ENCODE measurements at regions of chr14 and their contacts with region 1.

Region 1: DNA sequence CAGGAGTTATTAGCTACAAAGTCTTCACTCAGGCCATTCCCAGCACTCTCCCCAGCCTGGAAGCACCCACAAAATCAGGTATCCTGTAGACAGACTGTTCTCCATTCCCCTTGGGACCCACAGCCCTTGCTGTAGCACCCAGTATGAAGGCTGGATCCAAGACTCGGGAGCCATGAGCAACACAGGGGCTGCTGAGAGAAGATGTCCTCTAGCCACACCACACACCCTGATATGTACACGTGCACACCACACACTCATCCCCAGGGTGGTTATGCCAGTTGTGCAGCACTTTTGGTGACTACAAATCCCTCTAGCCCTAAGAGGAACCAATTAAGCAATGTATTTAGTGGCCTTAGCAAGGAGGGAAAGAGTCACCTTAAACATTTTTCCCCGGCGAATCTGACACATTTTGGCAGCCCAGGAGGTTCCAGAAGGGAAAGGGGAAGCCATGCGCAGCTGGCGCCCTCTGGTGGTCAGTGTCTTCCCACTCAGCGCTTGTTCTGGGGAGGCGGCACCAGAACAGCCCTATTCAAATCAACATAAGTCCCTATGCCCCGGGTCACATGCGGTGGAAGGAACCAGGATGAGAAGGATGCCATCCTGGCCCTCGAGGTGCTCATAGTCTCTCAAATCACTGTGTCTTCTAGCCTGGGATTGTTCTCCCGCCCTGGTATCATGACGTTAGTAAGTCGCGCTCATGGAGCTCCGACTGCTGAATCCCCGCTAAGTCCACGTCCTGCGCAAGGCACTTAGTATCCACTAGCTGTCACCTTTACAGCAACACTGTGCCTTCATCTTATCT is 96.9 kb downstream of the GCH1 start:
- DNase-seq: peak; percentile 80 to 87 (median 84)
- H3K4me3 ChIP-seq: peak overlapping the region in 1 of 7 experiments; percentile 19
- H3K27ac ChIP-seq: no peak overlapping the region
- H3K4me1 ChIP-seq: peaks cover 0 to 8% (median 0%) of the 10 kb centered on the region in 4 experiments
- H3K27me3 ChIP-seq: peaks cover 0 to 2% (median 0%) of the 10 kb centered on the region in 5 experiments

Region 2: DNA sequence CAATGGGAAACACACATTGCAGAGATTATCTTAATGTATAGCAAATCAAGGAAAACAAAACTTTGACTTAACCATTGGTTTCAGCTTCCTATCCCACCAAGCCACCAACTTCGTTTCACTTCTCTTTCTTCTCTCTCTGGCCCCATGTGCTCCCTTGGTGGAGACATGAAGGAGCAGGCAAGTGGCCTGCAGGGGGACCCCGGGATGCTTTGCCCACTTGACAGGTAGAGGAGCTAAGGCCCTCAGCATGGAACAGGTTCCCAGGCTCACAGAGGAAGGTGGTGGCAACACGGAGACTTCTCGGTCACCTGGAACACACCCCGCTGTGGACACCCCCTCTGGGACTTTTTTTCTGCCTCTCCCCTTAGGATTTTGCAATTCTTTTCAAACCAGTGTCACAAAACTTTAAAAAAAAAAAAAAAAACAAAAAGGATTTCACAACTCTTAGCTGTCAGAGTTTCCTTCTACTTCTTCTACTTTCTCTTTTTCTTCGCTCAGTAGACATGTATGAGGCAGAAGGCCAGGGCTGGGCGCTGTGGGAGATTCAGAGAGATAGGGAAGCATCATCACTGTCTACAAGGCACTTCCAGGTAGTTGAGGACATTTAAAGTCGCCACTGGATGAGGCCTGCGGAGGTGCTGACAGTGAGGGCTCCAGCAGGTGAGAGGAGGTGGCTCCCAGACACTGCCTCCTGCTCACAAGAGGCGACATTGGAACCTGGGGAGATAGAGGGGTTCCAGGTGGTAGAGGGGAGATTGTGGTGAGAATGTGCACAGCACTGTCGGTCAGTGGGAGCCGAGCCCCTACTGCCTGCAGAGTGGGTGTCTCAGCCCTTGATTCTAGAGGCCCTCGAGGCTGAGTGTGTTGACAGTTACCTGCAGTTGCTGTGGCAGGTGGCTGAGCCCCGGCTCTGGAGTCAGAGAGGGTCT is 22.7 kb before region 1 on chr14:
- CTCF ChIA-PET with region 1: interaction called, 76 read pairs
- POLR2A ChIA-PET with region 1: no interaction called
- DNase-seq: peak; percentile 65 to 77 (median 70)
- H3K4me3 ChIP-seq: no peak overlapping the region
- H3K27ac ChIP-seq: no peak overlapping the region
- H3K4me1 ChIP-seq: peaks cover 0 to 41% (median 24%) of the 10 kb centered on the region in 4 experiments
- H3K27me3 ChIP-seq: no peaks in the 10 kb centered on the region

Region 3: GRCh38 chr14:54792288-54792687 is 13.4 kb before region 1 on chr14:
- CTCF ChIA-PET with region 1: interaction called, 23 read pairs
- POLR2A ChIA-PET with region 1: no interaction called
- DNase-seq: no peak
- H3K4me3 ChIP-seq: no peak overlapping the region
- H3K27ac ChIP-seq: no peak overlapping the region
- H3K4me1 ChIP-seq: peaks cover 0 to 6% (median 5%) of the 10 kb centered on the region in 4 experiments
- H3K27me3 ChIP-seq: no peaks in the 10 kb centered on the region

Region 4: DNA sequence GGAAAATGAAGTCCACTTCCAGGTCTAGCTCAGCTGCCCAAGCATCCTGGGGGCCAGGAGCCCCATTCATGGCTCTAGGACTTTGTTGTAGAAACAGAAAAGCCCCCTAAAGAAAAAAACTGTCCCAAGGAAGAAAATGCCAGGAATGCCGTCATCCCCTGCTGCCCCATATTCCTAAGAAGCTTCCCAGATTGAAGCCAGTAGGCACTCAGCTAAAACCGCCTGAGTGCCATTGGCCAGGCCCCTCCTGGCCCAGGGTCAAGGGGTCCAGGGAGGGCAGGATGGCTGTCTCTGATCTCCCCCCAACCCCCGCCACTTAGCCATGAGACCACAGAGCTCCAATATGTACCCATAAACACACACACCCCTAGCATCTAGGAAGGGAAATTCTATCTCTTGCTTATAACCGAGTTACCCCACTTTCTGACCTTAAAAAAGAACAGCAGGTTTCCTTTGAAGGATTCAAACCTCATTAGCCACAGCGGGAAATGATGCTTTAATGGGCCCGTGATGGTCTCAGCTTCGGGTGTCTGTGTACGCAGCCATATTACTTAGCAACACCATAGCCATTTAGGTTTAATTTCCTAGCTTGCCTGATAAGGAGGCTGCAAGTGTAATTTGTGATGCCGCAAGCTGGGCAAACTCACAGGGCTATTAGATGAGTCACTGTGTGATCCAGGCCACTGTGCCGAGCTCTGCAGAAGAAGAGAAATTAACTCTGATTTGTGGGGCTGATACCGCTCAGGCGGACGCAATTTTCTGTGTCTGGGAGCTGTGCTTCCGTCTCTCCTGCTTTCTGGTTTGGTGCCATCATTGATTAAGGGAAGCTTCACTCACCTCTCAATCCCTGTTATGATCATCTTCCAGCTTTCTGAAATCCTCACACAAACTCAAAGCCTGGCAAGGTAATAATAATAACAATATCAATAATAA is 12.7 kb after region 1 on chr14:
- CTCF ChIA-PET with region 1: interaction called, 62 read pairs
- POLR2A ChIA-PET with region 1: no interaction called
- DNase-seq: no peak
- H3K4me3 ChIP-seq: no peak overlapping the region
- H3K27ac ChIP-seq: no peak overlapping the region
- H3K4me1 ChIP-seq: no peaks in the 10 kb centered on the region
- H3K27me3 ChIP-seq: peaks cover 0 to 4% (median 0%) of the 10 kb centered on the region in 5 experiments

Region 5: DNA sequence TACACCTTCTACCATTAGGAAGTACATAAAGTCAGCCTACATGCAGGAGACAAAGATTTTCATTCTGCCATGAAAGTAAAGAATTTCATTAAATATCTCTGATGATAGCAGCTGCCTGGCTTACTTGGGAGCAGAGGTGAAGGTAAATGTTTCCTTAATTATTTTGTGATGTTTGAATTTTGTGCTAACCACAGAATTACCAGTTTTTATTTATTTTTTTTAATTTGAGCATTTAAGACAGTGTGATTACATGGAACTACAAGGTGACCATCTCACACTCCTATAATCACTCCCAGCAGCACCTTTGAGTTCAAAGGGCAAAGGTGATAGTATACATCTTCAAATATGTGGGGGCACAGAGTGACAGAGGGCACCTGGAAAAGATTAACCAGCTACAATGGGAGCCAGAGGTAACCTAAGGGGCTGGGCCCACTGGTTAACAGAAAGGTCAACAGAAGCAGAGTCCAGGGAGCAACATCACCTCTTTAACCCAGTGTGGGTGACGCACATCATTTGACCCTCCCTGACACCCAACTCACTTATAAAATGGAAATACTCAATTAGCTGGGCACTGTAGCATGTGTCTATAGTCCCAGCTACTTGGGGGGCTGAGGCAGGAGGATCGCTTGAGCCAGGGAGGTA is 31.9 kb after region 1 on chr14:
- CTCF ChIA-PET with region 1: no interaction called
- POLR2A ChIA-PET with region 1: no interaction called
- DNase-seq: no peak
- H3K4me3 ChIP-seq: no peak overlapping the region
- H3K27ac ChIP-seq: no peak overlapping the region
- H3K4me1 ChIP-seq: no peaks in the 10 kb centered on the region
- H3K27me3 ChIP-seq: no peaks in the 10 kb centered on the region

Measured in common myeloid progenitor, CD34-positive (primary cell).